ENCODE measurements at regions of chr9 and their contacts with region 1.

Region 1: DNA sequence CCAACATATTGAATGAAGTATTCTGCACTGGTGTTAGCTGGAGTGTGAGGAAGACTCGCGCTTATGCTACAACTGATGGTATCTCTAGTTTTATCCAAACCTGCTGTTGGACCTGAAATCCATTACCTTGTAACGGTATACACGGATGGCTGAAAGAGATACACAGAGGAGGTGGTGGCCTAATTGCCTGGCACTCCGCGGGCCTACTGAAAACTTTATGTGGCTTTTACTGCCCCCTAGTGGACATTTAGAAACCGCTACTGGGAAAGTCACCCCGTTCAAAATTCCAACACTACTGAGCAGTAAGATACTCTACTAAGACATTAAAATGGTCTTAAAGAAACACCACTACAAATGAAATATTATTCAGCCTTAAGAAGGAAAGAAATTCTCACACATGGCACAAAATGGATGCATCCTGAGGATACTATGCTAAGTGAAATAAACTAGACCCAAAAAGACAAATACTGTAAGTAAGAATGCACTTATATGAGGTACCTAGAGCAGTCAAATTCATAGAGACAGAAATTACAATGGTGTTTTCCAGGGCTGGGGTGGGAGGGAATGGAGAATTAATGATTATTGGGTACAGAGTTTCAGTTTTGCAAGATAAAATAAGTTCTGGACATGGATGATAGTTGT is 100.4 kb downstream of the TTLL11 start:
- DNase-seq: peak; percentile 82
- H3K4me3 ChIP-seq: no peak overlapping the region
- CTCF ChIP-seq: peak; percentile 64

Region 2: DNA sequence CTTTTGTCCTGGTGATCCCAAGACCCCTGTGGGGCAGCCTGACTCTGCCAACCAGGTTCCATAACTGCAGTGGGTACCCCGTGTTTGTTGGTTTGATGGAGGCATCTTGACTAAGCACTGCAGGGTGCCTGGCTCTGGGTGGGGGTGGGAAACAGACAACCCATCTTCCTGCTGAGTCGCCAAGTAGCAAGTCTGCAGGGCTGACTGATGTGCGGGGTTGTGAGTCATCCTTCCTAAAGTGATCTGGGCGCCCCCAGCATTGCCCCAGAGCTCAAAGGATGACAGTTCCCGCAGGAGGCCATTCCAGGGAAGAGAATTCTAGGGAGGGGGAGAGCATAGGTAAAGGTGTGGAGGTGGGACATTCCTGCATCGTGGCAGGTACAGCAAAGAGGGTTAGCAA is 317.7 kb before region 1 on chr9:
- in situ Hi-C with region 1: no loop called
- DNase-seq: peak; percentile 43
- H3K4me3 ChIP-seq: no peak overlapping the region
- CTCF ChIP-seq: no peak

Region 3: DNA sequence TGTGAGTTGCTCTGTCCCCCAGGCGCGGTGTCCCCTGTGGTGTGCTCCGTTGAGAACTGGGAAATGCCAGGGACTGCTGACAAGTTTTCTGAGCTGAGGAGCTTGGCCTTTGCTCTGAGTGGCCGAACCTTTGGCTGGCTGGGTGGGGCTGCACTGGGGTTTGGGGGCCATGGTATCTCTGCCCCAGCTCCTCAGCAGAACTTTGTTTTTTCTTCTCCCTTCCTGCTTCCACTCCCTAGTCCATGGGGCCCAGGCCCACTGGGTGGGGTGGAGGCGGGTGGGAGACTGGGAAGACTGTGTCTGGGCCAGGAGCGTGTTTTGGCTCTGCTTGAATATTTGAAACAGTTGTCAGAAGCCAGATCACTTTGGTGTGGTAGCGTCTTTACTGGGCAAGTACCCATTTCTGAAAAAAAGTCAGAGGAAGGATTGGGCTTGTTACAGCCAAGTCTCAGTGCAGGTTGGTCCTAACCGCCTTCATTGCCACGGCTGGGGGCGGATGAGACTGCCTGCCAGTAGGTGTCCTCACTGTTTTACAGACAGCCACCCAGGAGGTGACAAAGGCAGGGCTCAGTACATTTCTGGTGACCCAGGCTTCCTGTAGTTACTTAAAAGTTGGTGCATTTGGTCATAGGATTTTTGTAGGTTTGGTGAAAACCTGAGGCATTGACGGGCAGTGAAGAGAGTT is 248.5 kb before region 1 on chr9:
- in situ Hi-C with region 1: loop called (anchors 25 kb)
- DNase-seq: peak; percentile 56
- H3K4me3 ChIP-seq: peak overlapping the region; percentile 55
- CTCF ChIP-seq: peak; percentile 67

Region 4: GRCh38 chr9:121765021-121765950 is 227.4 kb before region 1 on chr9:
- in situ Hi-C with region 1: no loop called
- DNase-seq: peak; percentile 54
- H3K4me3 ChIP-seq: no peak overlapping the region
- CTCF ChIP-seq: no peak

Region 5: GRCh38 chr9:122131401-122132001 is 138.8 kb after region 1 on chr9:
- in situ Hi-C with region 1: no loop called
- DNase-seq: no peak
- H3K4me3 ChIP-seq: no peak overlapping the region
- CTCF ChIP-seq: no peak

Region 6: DNA sequence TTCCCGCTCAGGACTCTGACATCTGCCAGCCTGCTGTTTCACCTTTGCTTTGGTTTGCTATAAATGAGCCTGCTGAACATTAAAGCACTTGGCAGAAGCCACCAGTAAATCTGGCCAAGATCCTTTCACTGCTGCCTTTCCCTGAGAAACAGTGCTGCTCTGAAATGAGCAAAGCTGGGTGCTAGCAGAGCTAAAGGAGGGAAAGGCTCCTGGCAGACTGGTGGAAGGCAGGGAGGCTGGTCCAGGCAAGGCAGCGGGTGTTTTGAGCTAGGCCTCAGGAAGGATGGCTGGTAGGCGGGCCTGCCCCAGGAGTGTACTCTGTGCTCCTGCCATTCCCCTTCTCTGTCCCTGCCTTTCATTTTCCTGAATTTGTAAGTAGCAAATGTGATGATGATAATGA is 325.6 kb after region 1 on chr9:
- in situ Hi-C with region 1: no loop called
- DNase-seq: peak; percentile 28
- H3K4me3 ChIP-seq: no peak overlapping the region
- CTCF ChIP-seq: no peak